Esophagus muscularis mucosa (tissue), 4 donors: ENCODE measurements at regions of chr19 and their contacts with region 1.

Region 1: DNA sequence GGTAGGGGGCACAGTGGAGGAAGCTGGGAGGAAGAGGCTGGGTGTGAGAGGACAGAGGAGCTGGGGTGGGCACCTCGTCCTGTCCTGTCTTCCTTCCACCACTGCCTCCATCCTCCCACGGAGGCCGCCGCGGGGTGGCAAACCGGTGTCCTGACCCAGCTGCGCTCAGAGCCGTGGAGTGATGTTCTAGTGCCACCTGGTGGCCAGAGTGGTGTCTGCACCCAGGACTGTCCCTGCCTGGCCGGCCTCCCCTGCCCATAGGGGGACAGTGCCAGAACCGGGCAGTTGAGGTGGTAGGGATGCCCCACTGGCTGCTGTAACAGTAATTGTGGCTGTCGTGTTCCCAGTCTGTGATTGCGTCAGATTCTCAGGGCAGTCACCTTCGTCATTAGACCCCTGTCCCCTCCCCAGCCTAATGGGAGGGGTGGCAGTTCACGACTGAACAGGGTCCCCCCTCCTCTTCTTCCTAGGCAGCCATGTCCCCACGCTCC is 11.1 kb upstream of the ARRDC2 start:
- DNase-seq: peak; percentile 96
- H3K4me3 ChIP-seq: no peak overlapping the region
- H3K27ac ChIP-seq: no peak overlapping the region
- H3K4me1 ChIP-seq: peaks cover 7 to 23% (median 17%) of the 10 kb centered on the region in 4 donors
- H3K27me3 ChIP-seq: peaks cover 0 to 15% (median 0%) of the 10 kb centered on the region in 4 donors
- CTCF ChIP-seq: peak; percentile 98 to 99 (median 99)
- EP300 ChIP-seq: no peak
- POLR2A ChIP-seq: no peak

Region 2: DNA sequence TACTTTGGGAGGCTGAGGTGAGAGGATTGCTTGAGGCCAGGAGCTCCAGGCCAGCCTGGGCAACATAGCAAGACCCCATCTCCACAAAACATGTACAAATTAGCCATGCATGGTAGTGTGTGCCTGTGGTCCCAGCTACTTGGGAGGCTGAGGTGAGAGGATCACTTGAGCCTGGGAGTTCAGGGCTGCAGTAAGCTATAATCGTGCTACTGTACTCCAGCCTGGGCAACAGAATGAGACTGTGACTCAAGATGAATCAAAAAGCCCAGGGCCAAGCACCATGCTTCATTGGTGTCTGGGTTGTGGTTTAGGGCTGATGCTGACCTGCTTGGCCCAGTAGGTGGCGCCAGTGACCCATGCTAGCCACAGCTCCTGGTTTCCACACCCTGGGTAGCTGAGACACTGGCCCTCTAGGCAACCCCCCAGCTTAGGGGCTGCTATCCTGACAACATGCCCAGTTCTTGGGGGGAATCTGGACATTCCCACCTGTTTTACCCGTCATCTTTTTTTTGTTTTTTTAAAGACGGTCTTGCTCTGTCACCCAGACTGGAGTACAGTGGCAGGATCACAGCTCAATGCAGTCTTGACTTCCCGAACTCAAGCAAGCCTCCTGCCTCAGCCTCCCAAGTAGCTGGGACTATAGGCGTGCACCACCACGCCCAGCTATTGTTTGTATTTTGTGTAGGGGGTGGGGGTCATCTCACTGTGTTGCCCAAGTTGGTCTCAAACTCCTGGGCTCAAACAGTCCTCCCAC is 58.6 kb before region 1 on chr19:
- intact Hi-C with region 1: loop called (anchors 1 kb)
- DNase-seq: no peak
- H3K4me3 ChIP-seq: no peak overlapping the region
- H3K27ac ChIP-seq: no peak overlapping the region
- H3K4me1 ChIP-seq: peaks cover 10 to 17% (median 15%) of the 10 kb centered on the region in 4 donors
- H3K27me3 ChIP-seq: no peaks in the 10 kb centered on the region
- CTCF ChIP-seq: peak; percentile 91 to 94 (median 93)
- EP300 ChIP-seq: no peak
- POLR2A ChIP-seq: no peak